AG04450 (cell line): ENCODE measurements at regions of chr11 and their contacts with region 1.

Region 1: GRCh38 chr11:115964091-115964490 is 459.9 kb upstream of the CADM1 start:
- DNase-seq: peak; percentile 16
- H3K4me3 ChIP-seq: no peak overlapping the region
- H3K27ac ChIP-seq: no peak overlapping the region
- H3K27me3 ChIP-seq: peaks cover 11% of the 10 kb centered on the region
- CTCF ChIP-seq: no peak

Region 2: GRCh38 chr11:115515647-115516046 is 448.4 kb before region 1 on chr11:
- CTCF ChIA-PET with region 1: no interaction called
- POLR2A ChIA-PET with region 1: interaction called, 10 read pairs
- DNase-seq: no peak
- H3K4me3 ChIP-seq: no peak overlapping the region
- H3K27ac ChIP-seq: no peak overlapping the region
- H3K27me3 ChIP-seq: peaks cover 17% of the 10 kb centered on the region
- CTCF ChIP-seq: no peak

Region 3: GRCh38 chr11:115845872-115846271 is 118.2 kb before region 1 on chr11:
- CTCF ChIA-PET with region 1: no interaction called
- POLR2A ChIA-PET with region 1: no interaction called
- DNase-seq: no peak
- H3K4me3 ChIP-seq: no peak overlapping the region
- H3K27ac ChIP-seq: no peak overlapping the region
- H3K27me3 ChIP-seq: no peaks in the 10 kb centered on the region
- CTCF ChIP-seq: no peak

Region 4: DNA sequence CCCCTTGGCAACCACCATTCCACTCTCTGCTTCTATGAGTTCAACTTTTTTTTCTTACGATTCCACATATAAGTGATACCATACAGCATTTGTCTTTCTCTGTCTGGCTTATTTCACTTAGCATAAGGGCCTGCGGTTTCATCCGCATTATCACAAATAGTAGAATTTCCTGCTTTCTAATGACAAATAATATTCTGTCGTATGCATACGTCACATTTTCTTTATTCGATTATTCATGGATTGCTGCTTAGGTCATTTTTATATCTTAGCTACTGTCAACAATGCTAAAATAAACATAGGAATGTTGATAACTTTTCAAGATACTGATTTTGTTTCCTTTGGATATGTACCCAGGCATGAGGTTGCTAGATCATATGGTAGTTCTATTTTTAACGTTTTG is 48.0 kb after region 1 on chr11:
- CTCF ChIA-PET with region 1: no interaction called
- POLR2A ChIA-PET with region 1: no interaction called
- DNase-seq: no peak
- H3K4me3 ChIP-seq: no peak overlapping the region
- H3K27ac ChIP-seq: no peak overlapping the region
- H3K27me3 ChIP-seq: no peaks in the 10 kb centered on the region
- CTCF ChIP-seq: no peak

Region 5: GRCh38 chr11:116030697-116031331 is 66.7 kb after region 1 on chr11:
- CTCF ChIA-PET with region 1: no interaction called
- POLR2A ChIA-PET with region 1: no interaction called
- DNase-seq: no peak
- H3K4me3 ChIP-seq: no peak overlapping the region
- H3K27ac ChIP-seq: no peak overlapping the region
- H3K27me3 ChIP-seq: no peaks in the 10 kb centered on the region
- CTCF ChIP-seq: no peak